Activated T-helper 2 cell treated with anti-CD3 and anti-CD28 coated beads, Interferon-gamma antibody, Interleukin-2, Interleukin-4, amounts not matched to agents 10 μg/mL and 5 μg/mL and 100 μg/mL, durations not matched to agents 14 hours and 24 hours and 36 hours (primary cell): ENCODE measurements at regions of chr11 and their contacts with region 1.

Region 1: DNA sequence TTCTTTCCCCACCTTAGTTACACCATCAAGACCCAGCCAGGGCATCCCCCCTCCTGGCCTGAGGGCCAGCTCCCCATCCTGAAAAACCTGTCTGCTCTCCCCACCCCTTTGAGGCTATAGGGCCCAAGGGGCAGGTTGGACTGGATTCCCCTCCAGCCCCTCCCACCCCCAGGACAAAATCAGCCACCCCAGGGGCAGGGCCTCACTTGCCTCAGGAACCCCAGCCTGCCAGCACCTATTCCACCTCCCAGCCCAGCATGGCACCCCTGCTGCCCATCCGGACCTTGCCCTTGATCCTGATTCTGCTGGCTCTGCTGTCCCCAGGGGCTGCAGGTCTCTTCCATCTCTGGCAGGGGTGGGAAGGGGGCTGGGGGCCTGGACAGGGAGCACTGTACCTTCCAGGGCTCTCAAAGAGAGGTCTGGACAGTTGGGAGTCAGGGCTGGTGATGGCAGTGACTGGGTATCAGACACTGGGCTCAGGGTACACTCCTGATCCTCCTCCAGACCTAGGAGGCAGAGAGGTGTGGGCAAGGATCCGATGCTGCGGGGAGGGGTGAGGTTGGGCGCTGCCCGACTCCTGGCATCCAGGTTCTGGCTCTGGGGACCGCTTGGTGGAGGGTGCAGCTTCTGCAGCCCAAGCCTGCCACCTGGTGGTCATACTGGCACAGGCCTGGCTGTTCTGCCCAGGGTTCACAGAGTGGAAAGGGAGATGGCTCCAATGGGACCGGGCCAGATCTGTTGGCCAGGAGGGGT is at the start of gene UPK2:
- DNase-seq: peak; percentile 76
- H3K4me3 Mint-ChIP-seq: no peak within 1 kb of the TSS
- H3K27ac Mint-ChIP-seq: no peak within 1 kb of the TSS
- H3K4me1 Mint-ChIP-seq: no peaks in the 10 kb centered on the region
- H3K27me3 Mint-ChIP-seq: peaks cover 18% of the 10 kb centered on the region
- total RNA-seq, gene UPK2: 0.21 TPM in 1 of 2 replicates, not detected in the other

Region 2: GRCh38 chr11:118689851-118690552 is 266.3 kb before region 1 on chr11:
- intact Hi-C with region 1: loop called (anchors 1 kb)
- DNase-seq: peak; percentile 75
- H3K4me3 Mint-ChIP-seq: peak overlapping the region; percentile 68
- H3K27ac Mint-ChIP-seq: no peak overlapping the region
- H3K4me1 Mint-ChIP-seq: peaks cover 26% of the 10 kb centered on the region
- H3K27me3 Mint-ChIP-seq: peaks cover 11% of the 10 kb centered on the region

Region 3: GRCh38 chr11:118907051-118908042 is 48.9 kb before region 1 on chr11:
- intact Hi-C with region 1: loop called (anchors 1 kb)
- DNase-seq: peak; percentile 80
- H3K4me3 Mint-ChIP-seq: no peak overlapping the region
- H3K27ac Mint-ChIP-seq: no peak overlapping the region
- H3K4me1 Mint-ChIP-seq: peaks cover 26% of the 10 kb centered on the region
- H3K27me3 Mint-ChIP-seq: no peaks in the 10 kb centered on the region

Region 4: DNA sequence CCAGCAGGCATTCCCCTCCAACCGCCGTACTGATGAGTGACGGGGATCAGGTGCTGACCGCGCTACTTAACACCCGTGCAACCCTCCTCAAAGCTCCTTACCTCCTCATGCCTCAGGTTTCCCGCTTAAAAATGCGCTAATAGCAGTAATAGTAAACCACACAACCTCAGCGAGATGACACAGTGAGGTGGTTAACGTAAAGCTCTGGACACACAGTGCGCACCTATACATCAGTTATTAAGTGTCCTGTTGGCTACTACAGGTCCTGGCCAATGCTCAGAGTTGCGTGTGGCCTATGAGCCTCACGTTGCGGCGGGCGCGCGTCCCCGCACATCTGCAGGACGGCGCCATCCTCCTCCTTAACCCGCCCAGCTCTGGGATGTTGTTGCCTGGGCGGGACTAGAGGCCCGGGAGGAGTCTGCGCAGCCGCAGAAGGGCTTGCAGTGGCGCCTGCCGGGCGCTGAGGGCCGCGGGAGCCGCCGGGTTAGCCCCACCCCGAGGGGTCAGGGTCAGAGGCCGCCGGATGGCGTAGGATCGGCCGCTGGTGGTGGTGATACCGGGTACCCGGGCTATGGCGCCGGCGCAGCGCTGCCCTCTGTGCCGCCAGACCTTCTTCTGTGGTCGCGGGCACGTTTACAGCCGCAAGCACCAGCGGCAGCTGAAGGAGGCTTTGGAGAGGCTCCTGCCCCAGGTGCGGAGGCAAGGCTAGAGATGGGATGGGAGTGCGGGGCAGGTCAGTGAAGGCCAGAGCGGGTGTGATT is 41.5 kb after region 1 on chr11 and contains the start of gene CENATAC:
- intact Hi-C with region 1: no loop called
- DNase-seq: peak; percentile 95
- H3K4me3 Mint-ChIP-seq: peak within 1 kb of the TSS; percentile 99
- H3K27ac Mint-ChIP-seq: peak within 1 kb of the TSS; percentile 98
- H3K4me1 Mint-ChIP-seq: peaks cover 21% of the 10 kb centered on the region
- H3K27me3 Mint-ChIP-seq: no peaks in the 10 kb centered on the region
- total RNA-seq, gene CENATAC: 44.2 and 47.7 TPM in 2 replicates